Activated B cell treated with CpG ODN at 0.5 μM for 24 hours (primary cell): ENCODE measurements at regions of chr19 and their contacts with region 1.

Region 1: DNA sequence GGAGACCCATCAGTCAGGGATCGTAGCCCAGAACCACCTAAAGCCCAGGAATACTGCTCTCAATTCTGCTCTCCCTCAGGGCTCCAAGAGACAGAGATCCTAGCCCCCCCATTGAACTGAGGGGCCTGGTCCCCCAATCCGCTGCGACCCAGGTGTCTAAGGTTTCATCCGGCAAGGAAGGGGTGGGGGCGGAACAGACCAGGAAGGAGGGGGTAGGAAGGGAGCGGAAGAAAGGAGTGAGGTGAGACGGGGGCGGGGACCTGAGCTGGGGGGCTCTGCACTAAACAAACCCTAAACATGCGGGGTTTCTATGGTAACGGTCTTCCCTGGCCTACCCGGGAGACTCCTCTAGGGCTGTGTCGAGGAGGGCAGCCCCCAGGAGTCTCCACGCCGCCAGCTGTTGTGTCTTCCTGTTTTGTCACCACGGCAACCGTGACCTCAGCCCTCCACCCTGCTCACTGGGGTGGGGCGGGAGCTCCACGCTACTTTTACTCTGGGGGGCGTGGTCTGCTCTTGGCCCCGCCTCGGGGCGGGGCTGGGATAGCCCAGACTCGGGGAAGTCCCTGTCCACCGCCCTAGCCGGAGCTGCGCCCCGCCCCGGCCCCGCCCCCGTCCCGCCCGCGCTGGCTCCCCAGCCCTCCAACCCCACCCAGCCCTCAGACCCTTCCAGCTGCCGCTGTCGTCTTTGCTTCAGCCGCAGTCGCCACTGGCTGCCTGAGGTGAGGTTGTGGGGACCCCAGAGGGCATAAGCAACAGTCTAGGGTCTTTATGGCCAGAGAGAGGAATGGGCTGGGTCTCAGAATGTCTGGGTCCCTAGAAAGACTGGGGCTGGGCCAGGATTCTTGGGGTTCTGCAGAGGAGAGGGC is at the start of gene MYADM:
- DNase-seq: peak; percentile 99
- ATAC-seq: peak; percentile 65
- H3K4me3 Mint-ChIP-seq: peak within 1 kb of the TSS; percentile 91
- H3K27ac Mint-ChIP-seq: peak within 1 kb of the TSS; percentile 93
- H3K4me1 Mint-ChIP-seq: peaks cover 44% of the 10 kb centered on the region
- H3K27me3 Mint-ChIP-seq: no peaks in the 10 kb centered on the region
- CTCF ChIP-seq: no peak
- total RNA-seq, gene MYADM: 10.9 and 12.9 TPM in 2 replicates

Region 2: DNA sequence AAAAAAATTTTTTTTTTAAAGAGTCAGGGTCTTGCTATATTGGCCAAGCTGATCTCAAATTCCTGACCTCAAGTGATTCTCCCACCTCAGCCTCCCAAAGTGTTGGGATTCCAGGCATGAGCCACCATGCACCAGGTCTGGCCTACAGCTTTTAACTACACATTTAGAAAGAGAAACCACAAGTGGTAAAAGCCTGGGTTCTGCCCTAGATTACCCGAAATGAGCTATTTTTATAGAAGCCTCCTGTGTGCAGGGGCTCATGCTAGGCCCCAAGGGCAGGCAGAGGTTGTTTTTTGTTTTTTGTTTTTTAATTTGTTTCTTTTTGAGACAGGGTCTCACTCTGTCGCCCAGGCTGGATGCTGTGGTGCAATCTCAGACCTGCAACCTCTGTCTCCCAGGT is 13.8 kb before region 1 on chr19:
- CTCF ChIA-PET with region 1: no interaction called
- POLR2A ChIA-PET with region 1: interaction called, 5 read pairs
- intact Hi-C with region 1: loop called (anchors 2 kb)
- DNase-seq: no peak
- ATAC-seq: no peak
- H3K4me3 Mint-ChIP-seq: no peak overlapping the region
- H3K27ac Mint-ChIP-seq: no peak overlapping the region
- H3K4me1 Mint-ChIP-seq: peaks cover 13% of the 10 kb centered on the region
- H3K27me3 Mint-ChIP-seq: peaks cover 23% of the 10 kb centered on the region
- CTCF ChIP-seq: no peak

Region 3: GRCh38 chr19:53879140-53880081 is 12.0 kb after region 1 on chr19:
- CTCF ChIA-PET with region 1: interaction called, 3 read pairs
- POLR2A ChIA-PET with region 1: interaction called, 10 read pairs
- intact Hi-C with region 1: loop called (anchors 1 kb)
- DNase-seq: peak; percentile 74
- ATAC-seq: peak; percentile 92
- H3K4me3 Mint-ChIP-seq: no peak overlapping the region
- H3K27ac Mint-ChIP-seq: no peak overlapping the region
- H3K4me1 Mint-ChIP-seq: peaks cover 41% of the 10 kb centered on the region
- H3K27me3 Mint-ChIP-seq: peaks cover 18% of the 10 kb centered on the region
- CTCF ChIP-seq: no peak

Region 4: GRCh38 chr19:54102421-54103169 is 235.1 kb after region 1 on chr19 and contains the start of gene NDUFA3:
- CTCF ChIA-PET with region 1: no interaction called
- POLR2A ChIA-PET with region 1: interaction called, 3 read pairs
- intact Hi-C with region 1: loop called (anchors 5 kb)
- DNase-seq: peak; percentile 93
- ATAC-seq: peak; percentile 97
- H3K4me3 Mint-ChIP-seq: peak within 1 kb of the TSS; percentile 99
- H3K27ac Mint-ChIP-seq: peak within 1 kb of the TSS; percentile 93
- H3K4me1 Mint-ChIP-seq: peaks cover 15% of the 10 kb centered on the region
- H3K27me3 Mint-ChIP-seq: no peaks in the 10 kb centered on the region
- CTCF ChIP-seq: no peak
- total RNA-seq, gene NDUFA3: 94.7 and 96.1 TPM in 2 replicates